AG04449 (cell line): ENCODE measurements at regions of chr12 and their contacts with region 1.

Region 1: GRCh38 chr12:54379401-54380201 is 4.9 kb downstream of the ZNF385A start:
- DNase-seq: no peak
- H3K4me3 ChIP-seq: peak overlapping the region; percentile 58
- CTCF ChIP-seq: peak; percentile 100

Region 2: GRCh38 chr12:53995378-53996239 is 384.0 kb before region 1 on chr12:
- CTCF ChIA-PET with region 1: interaction called, 10 read pairs
- POLR2A ChIA-PET with region 1: no interaction called
- DNase-seq: no peak
- H3K4me3 ChIP-seq: peak overlapping the region; percentile 96
- CTCF ChIP-seq: no peak

Region 3: DNA sequence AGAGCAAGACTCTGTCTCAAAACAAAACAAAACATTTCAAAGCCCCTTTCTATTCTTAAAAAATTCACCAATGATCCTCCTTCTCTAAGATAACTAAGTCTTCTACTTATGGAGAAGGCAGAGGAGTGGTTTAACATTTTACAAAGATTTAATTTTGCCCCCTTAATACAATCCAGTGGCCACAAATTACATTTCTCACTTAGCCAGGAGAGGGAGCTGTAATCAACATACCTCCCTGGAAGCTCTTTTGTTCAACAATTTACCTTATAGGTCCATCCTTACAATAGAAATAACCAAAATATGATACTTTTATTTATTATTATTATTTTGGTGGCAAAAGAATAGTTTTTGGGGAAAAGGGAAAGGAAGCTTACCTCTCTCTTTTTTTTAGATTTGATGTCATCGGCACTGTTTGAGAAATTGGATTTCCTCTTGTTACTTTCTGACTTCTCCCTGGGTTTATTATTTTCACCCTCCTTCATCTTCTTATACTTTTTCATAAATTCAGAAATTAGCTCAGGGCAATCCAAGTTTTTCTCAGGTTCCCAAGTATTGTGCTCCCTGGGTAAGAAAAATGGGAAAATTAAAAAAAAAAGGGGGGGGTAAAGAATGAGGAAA is 127.8 kb before region 1 on chr12:
- CTCF ChIA-PET with region 1: interaction called, 30 read pairs
- POLR2A ChIA-PET with region 1: no interaction called
- DNase-seq: no peak
- H3K4me3 ChIP-seq: no peak overlapping the region
- CTCF ChIP-seq: peak; percentile 42

Region 4: DNA sequence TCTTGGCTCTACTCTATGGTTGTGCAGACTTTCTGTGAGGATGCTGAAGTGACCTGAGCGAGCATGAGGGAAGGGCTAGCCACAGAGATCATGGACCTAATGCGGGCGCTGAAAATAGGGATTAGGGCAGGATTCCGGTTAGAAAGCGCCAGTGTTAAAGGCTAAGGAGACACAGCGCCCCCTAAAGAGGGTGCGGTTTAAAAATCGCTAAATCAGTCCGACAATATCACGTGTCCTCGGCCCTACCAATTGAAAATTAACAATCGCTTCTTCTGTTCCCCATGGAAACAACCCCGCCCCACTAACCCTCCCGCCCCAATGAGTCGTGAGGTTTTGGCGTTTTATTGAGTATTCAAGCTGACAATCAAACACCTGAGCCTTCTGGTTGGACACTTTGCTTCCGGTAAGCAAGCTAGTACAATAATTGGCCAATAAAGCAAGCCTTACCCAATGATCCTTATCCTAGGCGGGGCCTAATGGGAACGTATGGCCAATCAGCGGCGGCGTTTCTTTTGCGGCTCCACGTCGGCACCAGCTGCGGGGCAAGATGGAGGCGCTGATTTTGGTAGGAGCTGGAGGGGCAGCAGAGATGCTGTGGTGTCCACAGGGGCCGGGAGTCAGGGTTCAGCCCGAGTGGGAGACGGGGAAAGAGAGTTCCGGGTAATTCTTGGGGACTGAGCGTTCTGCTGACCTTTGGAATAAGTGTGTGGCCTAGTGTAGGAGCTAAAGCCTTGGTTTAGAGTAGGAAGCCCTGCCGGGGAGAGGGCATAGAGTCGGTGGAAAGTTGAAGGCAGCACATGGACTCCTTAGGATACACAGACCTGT is 54.8 kb before region 1 on chr12 and contains the start of gene COPZ1:
- CTCF ChIA-PET with region 1: interaction called, 11 read pairs
- POLR2A ChIA-PET with region 1: interaction called, 4 read pairs
- DNase-seq: peak; percentile 100
- H3K4me3 ChIP-seq: peak within 1 kb of the TSS; percentile 96
- CTCF ChIP-seq: peak; percentile 83

Region 5: DNA sequence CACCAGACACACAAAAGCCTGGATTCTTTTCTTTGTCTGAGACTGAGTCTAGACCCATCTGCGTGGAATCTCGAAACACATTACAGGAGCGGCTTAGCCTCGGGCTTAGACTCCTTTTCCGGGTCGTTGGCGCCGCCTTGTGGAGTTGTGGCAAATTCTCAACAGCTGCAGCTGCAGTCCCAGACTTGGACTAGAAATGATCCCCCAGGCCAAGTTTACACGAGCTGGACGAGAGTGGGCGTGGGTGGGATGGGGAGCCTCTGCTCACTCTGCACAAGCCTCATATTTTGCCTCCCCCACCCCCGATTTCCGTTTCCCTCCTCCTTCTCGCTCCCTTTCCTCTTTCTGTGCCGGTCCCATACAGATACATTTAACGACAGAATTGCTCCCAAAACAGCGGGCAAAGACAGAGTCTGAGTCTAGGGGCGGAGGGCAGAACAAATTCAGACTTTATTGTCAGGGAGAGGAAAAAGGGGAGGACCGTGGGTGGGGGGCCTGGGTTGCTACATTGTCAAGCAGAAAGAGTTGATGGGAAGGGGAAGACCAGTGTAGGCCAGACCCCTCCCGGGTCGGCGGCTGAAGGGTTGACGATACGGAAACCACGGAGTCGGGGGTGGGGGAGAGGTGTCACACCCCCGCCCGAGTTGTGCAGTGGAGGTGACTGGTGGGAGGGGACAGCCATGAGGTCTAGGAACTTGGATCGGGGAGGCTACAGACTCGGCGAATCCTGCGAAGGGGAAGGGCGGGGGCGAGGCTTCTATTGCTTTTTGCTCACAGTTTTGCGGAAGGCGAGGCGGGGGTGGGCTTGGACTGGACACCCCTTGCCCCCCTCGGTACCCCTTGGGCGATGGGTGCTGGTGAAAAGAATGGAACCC is 10.7 kb before region 1 on chr12:
- CTCF ChIA-PET with region 1: interaction called, 108 read pairs
- POLR2A ChIA-PET with region 1: interaction called, 3 read pairs
- DNase-seq: peak; percentile 34
- H3K4me3 ChIP-seq: no peak overlapping the region
- CTCF ChIP-seq: peak; percentile 85

Region 6: GRCh38 chr12:54419088-54419892 is 39.7 kb after region 1 on chr12 and contains the start of gene ITGA5:
- CTCF ChIA-PET with region 1: interaction called, 117 read pairs
- POLR2A ChIA-PET with region 1: no interaction called
- DNase-seq: no peak
- H3K4me3 ChIP-seq: peak within 1 kb of the TSS; percentile 87
- CTCF ChIP-seq: no peak

Region 7: DNA sequence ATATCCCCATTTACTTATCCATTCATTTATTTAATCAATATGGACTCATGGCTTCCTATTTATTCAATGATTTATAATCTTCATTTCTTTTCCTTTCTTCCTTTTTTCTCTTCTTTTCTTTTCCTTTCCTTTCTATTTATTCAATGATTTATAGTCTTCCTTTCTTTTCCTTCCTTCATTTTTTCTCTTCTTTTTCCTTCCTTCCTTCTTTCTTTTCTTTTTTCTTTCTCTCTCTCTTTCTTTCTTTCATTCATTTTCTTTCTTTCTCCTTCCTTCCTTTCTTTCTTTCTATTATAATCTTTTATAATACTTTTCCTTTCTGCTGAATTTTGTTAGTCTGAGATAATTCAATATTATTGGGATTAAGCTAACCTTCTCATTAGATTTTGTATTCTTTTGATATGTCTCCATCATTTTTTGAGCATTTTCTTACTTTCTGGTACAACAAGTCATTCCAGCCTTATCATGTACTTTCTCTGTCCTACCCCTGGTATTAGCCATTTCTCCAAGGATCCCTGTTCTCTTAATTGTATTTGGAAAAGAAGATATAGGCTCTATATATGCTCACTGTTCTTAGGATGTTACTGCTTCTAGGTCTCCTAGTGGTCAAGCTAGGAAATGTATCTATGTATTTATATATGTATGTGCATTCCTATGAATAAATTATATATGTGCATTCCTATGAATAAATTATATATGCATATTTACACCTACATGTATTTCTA is 243.0 kb after region 1 on chr12:
- CTCF ChIA-PET with region 1: no interaction called
- POLR2A ChIA-PET with region 1: no interaction called
- DNase-seq: no peak
- H3K4me3 ChIP-seq: no peak overlapping the region
- CTCF ChIP-seq: no peak